KBM-7 (cell line): ENCODE measurements at regions of chr11 and their contacts with region 1.

Region 1: GRCh38 chr11:33161120-33162005 is at the start of gene CSTF3:
- DNase-seq: peak; percentile 98

Region 2: GRCh38 chr11:33257897-33258630 is 96.7 kb after region 1 on chr11:
- in situ Hi-C with region 1: no loop called
- DNase-seq: peak; percentile 93

Region 3: GRCh38 chr11:33329705-33330329 is 168.5 kb after region 1 on chr11:
- in situ Hi-C with region 1: loop called (anchors 25 kb)
- DNase-seq: peak; percentile 51